Activated CD4-positive, alpha-beta memory T cell treated with anti-CD3 and anti-CD28 coated beads for 36 hours (primary cell): ENCODE measurements at regions of chr7 and their contacts with region 1.

Region 1: GRCh38 chr7:8190119-8190895 is 71.7 kb downstream of the ICA1 start:
- DNase-seq: peak; percentile 63
- H3K4me3 Mint-ChIP-seq: no peak overlapping the region
- H3K27ac Mint-ChIP-seq: no peak overlapping the region
- H3K4me1 Mint-ChIP-seq: peaks cover 13% of the 10 kb centered on the region
- H3K27me3 Mint-ChIP-seq: no peaks in the 10 kb centered on the region

Region 2: DNA sequence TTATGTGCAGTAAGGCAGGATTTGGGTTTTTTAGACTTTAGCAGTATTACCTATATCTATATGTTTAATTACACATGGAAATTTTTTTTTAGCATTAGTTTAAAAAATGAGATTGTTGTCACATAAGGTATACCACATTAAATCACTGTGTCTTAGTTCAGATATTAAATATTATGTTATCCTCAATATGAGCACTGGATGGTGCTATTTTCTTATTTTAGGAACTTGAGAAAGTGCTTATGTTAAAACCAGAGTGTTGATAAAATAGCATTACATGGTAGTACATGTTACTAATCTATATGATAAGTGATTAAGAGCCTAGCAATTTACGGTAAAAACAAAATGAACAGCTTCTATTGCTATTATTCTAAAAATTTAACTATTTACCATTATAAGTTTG is 594.9 kb before region 1 on chr7:
- CTCF ChIA-PET with region 1: interaction called, 5 read pairs
- POLR2A ChIA-PET with region 1: no interaction called
- intact Hi-C with region 1: loop called (anchors 1 kb)
- DNase-seq: no peak
- H3K4me3 Mint-ChIP-seq: no peak overlapping the region
- H3K27ac Mint-ChIP-seq: no peak overlapping the region
- H3K4me1 Mint-ChIP-seq: no peaks in the 10 kb centered on the region
- H3K27me3 Mint-ChIP-seq: no peaks in the 10 kb centered on the region

Region 3: GRCh38 chr7:7681179-7681935 is 508.9 kb before region 1 on chr7:
- CTCF ChIA-PET with region 1: interaction called, 47 read pairs
- POLR2A ChIA-PET with region 1: no interaction called
- intact Hi-C with region 1: loop called (anchors 1 kb)
- DNase-seq: no peak
- H3K4me3 Mint-ChIP-seq: no peak overlapping the region
- H3K27ac Mint-ChIP-seq: peak overlapping the region; percentile 52
- H3K4me1 Mint-ChIP-seq: peaks cover 30% of the 10 kb centered on the region
- H3K27me3 Mint-ChIP-seq: no peaks in the 10 kb centered on the region

Region 4: DNA sequence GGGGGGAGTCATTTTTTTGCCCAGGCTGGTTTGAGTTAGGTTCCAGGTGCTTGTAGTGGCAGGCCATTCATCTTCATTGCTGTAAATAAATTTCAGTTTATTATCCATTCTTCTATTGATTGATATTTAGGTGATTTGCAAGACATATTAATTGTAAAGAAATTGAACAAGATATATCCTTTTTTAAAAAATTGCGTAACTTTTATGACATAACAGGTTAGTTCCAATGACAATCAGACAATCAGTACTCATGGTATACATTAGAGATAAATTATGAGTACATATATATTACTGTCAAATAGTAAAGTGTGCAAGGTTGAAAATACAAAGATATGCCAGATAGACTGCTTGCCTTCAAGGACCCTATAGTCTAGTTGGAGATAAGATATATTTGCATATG is 313.9 kb before region 1 on chr7:
- CTCF ChIA-PET with region 1: no interaction called
- POLR2A ChIA-PET with region 1: no interaction called
- intact Hi-C with region 1: no loop called
- DNase-seq: no peak
- H3K4me3 Mint-ChIP-seq: no peak overlapping the region
- H3K27ac Mint-ChIP-seq: no peak overlapping the region
- H3K4me1 Mint-ChIP-seq: no peaks in the 10 kb centered on the region
- H3K27me3 Mint-ChIP-seq: no peaks in the 10 kb centered on the region

Region 5: DNA sequence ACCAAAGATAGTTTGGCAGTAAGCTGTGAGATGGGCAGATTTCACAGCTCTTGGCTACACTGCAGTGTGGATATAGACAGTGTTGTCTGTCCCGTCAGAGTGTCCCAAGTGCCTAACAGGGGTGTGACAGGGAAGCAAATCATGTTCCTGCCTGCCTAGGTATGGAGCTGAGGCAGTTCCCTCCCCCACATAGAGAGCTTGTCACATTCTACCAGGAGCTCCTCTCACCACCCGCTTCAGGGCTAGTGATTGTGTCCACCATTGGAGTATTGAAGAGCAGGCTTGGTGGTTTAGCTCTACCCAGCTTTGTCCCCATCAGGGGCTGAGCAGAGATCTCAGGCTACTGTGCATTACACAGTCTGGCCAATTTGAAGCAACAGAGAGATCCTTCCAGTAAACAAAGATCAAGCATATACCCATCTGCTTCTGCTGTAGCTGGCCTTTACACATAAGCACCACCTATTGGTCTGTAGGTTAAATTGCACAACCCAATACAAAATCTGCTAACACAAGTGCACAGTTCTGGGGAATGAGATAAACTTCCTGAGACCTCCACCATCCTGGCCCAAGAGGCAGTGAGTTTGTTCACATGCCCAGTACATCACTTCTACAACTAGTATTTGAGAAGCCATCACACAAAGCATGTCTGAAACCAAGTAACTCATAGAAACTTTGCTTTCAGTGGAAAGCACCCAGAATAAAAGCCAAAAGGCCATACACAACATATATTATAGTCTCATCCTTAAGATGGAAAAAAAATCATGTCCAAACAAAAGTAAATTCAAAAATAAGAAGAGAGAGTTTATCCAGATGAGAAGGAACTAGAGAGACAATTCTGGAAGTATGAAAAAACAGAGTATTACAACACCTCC is 154.4 kb before region 1 on chr7:
- CTCF ChIA-PET with region 1: interaction called, 13 read pairs
- POLR2A ChIA-PET with region 1: no interaction called
- intact Hi-C with region 1: loop called (anchors 2 kb)
- DNase-seq: no peak
- H3K4me3 Mint-ChIP-seq: no peak overlapping the region
- H3K27ac Mint-ChIP-seq: peak overlapping the region; percentile 43
- H3K4me1 Mint-ChIP-seq: peaks cover 25% of the 10 kb centered on the region
- H3K27me3 Mint-ChIP-seq: no peaks in the 10 kb centered on the region

Region 6: GRCh38 chr7:8125680-8126444 is 64.4 kb before region 1 on chr7:
- CTCF ChIA-PET with region 1: interaction called, 12 read pairs
- POLR2A ChIA-PET with region 1: no interaction called
- intact Hi-C with region 1: no loop called
- DNase-seq: peak; percentile 89
- H3K4me3 Mint-ChIP-seq: peak overlapping the region; percentile 66
- H3K27ac Mint-ChIP-seq: peak overlapping the region; percentile 92
- H3K4me1 Mint-ChIP-seq: peaks cover 78% of the 10 kb centered on the region
- H3K27me3 Mint-ChIP-seq: no peaks in the 10 kb centered on the region

Region 7: GRCh38 chr7:8134089-8134733 is 56.1 kb before region 1 on chr7:
- CTCF ChIA-PET with region 1: interaction called, 13 read pairs
- POLR2A ChIA-PET with region 1: no interaction called
- intact Hi-C with region 1: no loop called
- DNase-seq: peak; percentile 66
- H3K4me3 Mint-ChIP-seq: peak overlapping the region; percentile 35
- H3K27ac Mint-ChIP-seq: peak overlapping the region; percentile 71
- H3K4me1 Mint-ChIP-seq: peaks cover 60% of the 10 kb centered on the region
- H3K27me3 Mint-ChIP-seq: no peaks in the 10 kb centered on the region

Region 8: DNA sequence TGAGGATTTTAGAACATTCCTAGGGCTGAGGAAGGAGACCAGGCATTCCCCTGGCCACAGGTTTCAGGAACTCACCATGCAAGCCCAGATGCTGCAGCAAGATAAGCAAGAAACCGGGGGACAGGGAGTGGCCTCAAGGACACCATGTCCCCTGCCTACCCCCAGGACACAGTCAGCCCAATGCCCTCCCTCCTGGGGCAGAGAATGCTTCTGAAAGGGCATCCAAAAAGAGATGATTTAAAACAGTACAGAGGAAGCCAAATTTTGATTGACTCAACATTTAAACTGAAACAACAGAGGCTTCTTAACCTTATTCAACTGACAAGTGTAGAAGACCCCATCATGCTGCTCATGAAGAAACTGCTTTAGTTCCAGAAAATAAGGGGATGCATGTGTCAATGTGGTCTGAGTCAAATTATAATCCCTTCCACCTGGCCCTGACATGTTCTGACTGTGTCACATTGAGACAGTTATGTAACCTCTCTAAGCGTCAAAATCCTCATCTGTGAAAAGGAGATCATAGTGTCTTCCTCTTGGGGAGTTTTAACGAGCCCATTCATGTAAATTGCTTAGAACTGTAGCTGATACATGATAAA is 11.6 kb after region 1 on chr7:
- CTCF ChIA-PET with region 1: no interaction called
- POLR2A ChIA-PET with region 1: no interaction called
- intact Hi-C with region 1: no loop called
- DNase-seq: no peak
- H3K4me3 Mint-ChIP-seq: no peak overlapping the region
- H3K27ac Mint-ChIP-seq: no peak overlapping the region
- H3K4me1 Mint-ChIP-seq: peaks cover 10% of the 10 kb centered on the region
- H3K27me3 Mint-ChIP-seq: no peaks in the 10 kb centered on the region